ENCODE measurements at regions of chr17 and their contacts with region 1.

Region 1: DNA sequence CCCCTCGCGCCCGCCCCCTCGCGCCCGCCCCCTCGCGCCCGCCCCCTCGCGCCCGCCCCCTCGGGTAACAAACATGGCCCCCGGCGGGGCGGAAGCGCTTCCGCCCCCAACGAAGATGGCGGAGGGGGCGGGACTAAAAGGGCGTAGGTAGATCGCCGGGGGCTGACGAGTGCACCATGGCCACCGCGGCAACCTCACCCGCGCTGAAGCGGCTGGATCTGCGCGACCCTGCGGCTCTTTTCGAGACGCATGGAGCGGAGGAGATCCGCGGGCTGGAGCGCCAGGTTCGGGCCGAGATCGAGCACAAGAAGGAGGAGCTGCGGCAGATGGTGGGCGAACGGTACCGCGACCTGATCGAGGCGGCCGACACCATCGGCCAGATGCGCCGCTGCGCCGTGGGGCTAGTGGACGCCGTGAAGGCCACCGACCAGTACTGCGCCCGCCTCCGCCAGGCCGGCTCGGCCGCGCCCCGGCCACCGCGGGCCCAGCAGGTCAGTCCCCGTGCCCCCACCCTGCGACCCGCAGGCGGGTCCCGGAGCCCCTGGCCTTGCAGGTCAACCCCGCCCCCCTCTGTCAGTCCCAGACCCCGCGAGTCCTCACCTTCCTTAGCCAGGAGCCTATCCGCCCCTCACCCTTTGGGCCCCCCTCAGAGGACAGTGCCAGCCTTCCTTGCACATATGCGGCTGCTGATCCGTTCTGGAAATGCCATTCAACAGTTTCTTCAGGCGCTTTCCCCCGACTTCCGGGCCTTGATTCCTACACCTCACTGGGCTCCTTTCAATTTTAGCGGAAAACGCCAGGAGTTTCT is at the start of gene COG1:
- DNase-seq: peak; percentile 85 to 86
- ATAC-seq: peak; percentile 74
- total RNA-seq, gene COG1: 46.4 to 59.6 TPM

Region 2: DNA sequence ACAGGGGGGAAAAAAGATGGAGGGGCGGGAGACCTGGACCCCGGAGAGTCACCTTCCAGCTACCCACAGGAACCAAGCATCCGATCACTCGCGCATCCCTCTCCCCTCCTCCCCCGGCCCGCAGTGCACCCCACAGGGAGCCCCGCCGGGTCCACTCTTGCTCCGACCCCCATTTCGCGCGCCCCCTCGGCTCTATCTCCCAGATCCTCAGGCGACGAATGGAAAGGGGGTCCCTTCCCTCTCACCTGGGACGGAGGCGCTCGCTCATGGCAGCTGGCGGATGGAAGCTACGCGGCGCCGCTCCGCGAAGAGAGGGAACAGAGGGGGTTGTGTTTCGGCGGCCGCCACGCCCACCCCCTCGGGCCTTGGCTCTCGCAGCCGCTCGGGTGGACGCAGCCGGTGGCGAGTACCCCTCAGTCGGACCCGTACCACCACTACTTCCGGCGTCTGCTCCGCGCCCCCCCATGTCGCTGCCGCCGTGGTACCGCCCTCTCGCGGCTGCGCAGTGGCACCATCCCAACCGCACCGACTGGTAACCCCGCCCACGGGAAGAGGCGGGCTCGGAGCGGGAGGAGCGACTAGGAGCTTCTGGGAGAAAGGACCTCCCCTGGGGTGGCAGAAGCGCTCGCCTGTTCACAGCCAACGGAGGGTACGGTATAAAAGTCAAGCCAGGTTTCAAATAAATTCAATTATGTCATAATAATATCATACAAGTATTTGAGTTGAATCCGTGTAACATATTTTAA is 38.9 kb after region 1 on chr17:
- intact Hi-C with region 1: loop called in 1 of 2 experiments (anchors 5 kb)
- DNase-seq: peak; percentile 96
- ATAC-seq: peak; percentile 92